ENCODE measurements at regions of chr10 and their contacts with region 1.

Region 1: DNA sequence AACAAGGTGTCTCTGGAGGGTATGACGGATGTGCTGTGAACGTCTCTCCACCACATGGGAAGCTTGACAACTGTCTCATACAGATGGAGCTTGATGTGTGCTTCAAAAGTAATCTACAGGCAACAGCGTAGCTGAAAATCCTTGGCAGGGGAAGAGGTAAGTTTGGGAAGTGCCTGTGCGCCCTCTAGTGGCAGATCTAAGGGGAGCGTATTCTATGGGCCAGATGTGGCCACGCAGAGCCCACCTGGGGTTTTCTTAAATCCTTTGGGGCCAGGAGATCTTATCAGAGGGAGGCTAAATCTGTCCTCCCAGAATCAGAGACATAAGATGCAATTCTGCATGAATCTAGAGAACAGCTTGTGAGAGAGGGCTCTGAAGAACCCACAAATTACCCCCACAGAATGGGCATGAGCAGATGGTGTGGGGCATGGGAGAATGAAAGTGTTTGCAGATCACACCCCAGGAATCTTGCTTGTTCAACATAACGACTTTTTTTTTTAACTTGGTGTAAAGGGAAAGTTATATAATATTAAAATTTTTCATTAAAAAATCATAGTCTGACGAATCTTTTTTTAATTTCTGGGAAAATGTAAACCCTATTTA is 91.2 kb upstream of the MPP7 start:
- H3K4me3 Mint-ChIP-seq: no peak overlapping the region
- H3K27ac Mint-ChIP-seq: no peak overlapping the region
- H3K4me1 Mint-ChIP-seq: peaks cover 26% of the 10 kb centered on the region
- H3K27me3 Mint-ChIP-seq: no peaks in the 10 kb centered on the region

Region 2: GRCh38 chr10:27742195-27743011 is 651.7 kb before region 1 on chr10:
- intact Hi-C with region 1: loop called (anchors 10 kb)
- H3K4me3 Mint-ChIP-seq: peak overlapping the region; percentile 78
- H3K27ac Mint-ChIP-seq: no peak overlapping the region
- H3K4me1 Mint-ChIP-seq: peaks cover 53% of the 10 kb centered on the region
- H3K27me3 Mint-ChIP-seq: peaks cover 76% of the 10 kb centered on the region

Region 3: DNA sequence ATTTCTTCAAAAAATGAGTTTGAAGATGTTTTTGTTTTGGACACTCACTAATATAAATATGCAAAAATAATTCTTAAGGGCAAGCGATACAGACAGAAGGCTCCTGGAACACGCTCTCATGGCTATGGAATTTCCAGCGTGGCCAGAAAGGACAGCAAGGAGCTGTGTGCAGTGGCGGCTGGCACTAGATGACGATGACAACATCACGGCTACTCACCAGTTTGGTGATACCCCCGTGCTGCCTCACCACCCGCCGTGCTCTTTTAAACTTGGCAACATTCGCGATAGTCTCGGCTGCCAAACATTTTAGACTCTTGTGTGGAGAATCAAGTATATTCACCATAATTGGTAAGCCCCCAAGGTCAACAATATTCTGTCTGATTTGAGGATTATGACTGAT is 450.1 kb before region 1 on chr10:
- intact Hi-C with region 1: no loop called
- H3K4me3 Mint-ChIP-seq: no peak overlapping the region
- H3K27ac Mint-ChIP-seq: no peak overlapping the region
- H3K4me1 Mint-ChIP-seq: no peaks in the 10 kb centered on the region
- H3K27me3 Mint-ChIP-seq: no peaks in the 10 kb centered on the region